B cell (primary cell): ENCODE measurements at regions of chr15 and their contacts with region 1.

Region 1: DNA sequence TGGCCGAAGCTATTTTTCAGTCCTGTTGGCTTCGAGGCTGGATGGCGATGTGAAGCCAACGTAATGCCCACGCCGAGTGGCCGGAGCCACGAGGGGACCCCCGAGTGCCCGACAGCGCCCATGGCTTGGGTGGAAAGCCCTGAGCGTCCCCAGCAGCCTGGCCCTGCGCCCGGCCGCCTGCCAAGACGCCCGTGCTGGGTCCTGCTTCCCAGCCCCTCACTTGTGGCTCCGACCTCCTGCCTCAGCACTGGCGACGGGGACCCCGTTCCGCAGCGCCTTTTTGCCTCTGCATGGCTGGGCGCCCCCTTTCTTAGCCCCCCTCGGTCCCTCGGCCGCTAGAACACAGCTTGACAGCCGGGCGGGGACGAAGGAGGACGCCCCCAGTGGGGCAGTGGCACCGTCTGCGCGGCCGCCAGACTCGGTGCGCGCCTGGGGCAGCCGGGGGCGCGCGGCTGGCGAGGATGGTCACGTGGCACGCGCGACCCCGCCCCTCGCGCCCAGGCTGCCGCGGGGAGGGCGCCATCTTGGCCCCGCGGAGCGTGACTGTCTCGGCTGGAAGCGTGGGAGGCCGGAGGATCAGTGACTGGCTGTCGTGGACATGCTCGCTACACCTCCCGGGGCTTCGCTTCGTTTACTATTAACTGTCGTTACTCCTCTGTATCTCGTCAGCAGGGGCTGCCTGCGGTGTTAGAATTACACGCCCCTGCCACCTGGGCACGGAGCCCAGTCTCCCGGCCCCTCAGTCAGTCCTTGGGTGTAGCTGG is 626 bp upstream of the GPR176 start:
- DNase-seq: peak; percentile 83
- ATAC-seq: peak; percentile 95
- H3K4me3 ChIP-seq: peak overlapping the region; percentile 67 to 90 (median 71)
- H3K4me3 Mint-ChIP-seq: peak overlapping the region; percentile 92
- H3K27ac ChIP-seq: peak overlapping the region in 1 of 2 donors; percentile 37
- H3K27ac Mint-ChIP-seq: peak overlapping the region; percentile 84
- H3K4me1 ChIP-seq: peaks cover 21 to 23% of the 10 kb centered on the region in 2 donors
- H3K4me1 Mint-ChIP-seq: peaks cover 16% of the 10 kb centered on the region
- H3K27me3 ChIP-seq: peaks cover 0 to 31% (median 19%) of the 10 kb centered on the region in 4 experiments
- H3K27me3 Mint-ChIP-seq: peaks cover 19% of the 10 kb centered on the region
- CTCF ChIP-seq: no peak

Region 2: GRCh38 chr15:39934397-39935071 is 13.8 kb after region 1 on chr15:
- CTCF ChIA-PET with region 1: interaction called, 3 read pairs
- POLR2A ChIA-PET with region 1: no interaction called
- intact Hi-C with region 1: loop called (anchors 1 kb)
- DNase-seq: no peak
- ATAC-seq: no peak
- H3K4me3 ChIP-seq: peak overlapping the region; percentile 45 to 80 (median 68)
- H3K4me3 Mint-ChIP-seq: peak overlapping the region; percentile 91
- H3K27ac ChIP-seq: peak overlapping the region in 1 of 2 donors; percentile 71
- H3K27ac Mint-ChIP-seq: peak overlapping the region; percentile 39
- H3K4me1 ChIP-seq: peaks cover 13 to 23% of the 10 kb centered on the region in 2 donors
- H3K4me1 Mint-ChIP-seq: peaks cover 38% of the 10 kb centered on the region
- H3K27me3 ChIP-seq: peaks cover 0 to 12% (median 3%) of the 10 kb centered on the region in 4 experiments
- H3K27me3 Mint-ChIP-seq: peaks cover 16% of the 10 kb centered on the region
- CTCF ChIP-seq: no peak

Region 3: GRCh38 chr15:40160689-40161688 is 240.3 kb after region 1 on chr15 and contains the start of gene BUB1B:
- CTCF ChIA-PET with region 1: no interaction called
- POLR2A ChIA-PET with region 1: no interaction called
- intact Hi-C with region 1: loop called (anchors 2 kb)
- DNase-seq: peak; percentile 96
- ATAC-seq: peak; percentile 97
- H3K4me3 ChIP-seq: peak within 1 kb of the TSS; percentile 56 to 77 (median 71)
- H3K4me3 Mint-ChIP-seq: no peak within 1 kb of the TSS
- H3K27ac ChIP-seq: no peak within 1 kb of the TSS
- H3K27ac Mint-ChIP-seq: no peak within 1 kb of the TSS
- H3K4me1 ChIP-seq: peaks cover 10 to 14% of the 10 kb centered on the region in 2 donors
- H3K4me1 Mint-ChIP-seq: peaks cover 7% of the 10 kb centered on the region
- H3K27me3 ChIP-seq: no peaks in the 10 kb centered on the region
- H3K27me3 Mint-ChIP-seq: no peaks in the 10 kb centered on the region
- CTCF ChIP-seq: no peak
- total RNA-seq, gene BUB1B: 2.9 and 4.4 TPM in 2 replicates